K562 (cell line): ENCODE measurements at regions of chr9 and their contacts with region 1.

Region 1: GRCh38 chr9:37870799-37871176 is 33.1 kb downstream of the SLC25A51 start:
- DNase-seq: no peak
- ATAC-seq: no peak
- H3K4me3 ChIP-seq: no peak overlapping the region
- H3K27ac ChIP-seq: no peak overlapping the region
- H3K4me1 ChIP-seq: peaks cover 0 to 7% of the 10 kb centered on the region in 2 experiments; a peak in 3 of 5 replicates
- H3K27me3 ChIP-seq: no peaks in the 10 kb centered on the region
- CTCF ChIP-seq: no peak
- EP300 ChIP-seq: no peak
- POLR2A ChIP-seq: no peak
- RAD21 ChIP-seq: no peak

Region 2: DNA sequence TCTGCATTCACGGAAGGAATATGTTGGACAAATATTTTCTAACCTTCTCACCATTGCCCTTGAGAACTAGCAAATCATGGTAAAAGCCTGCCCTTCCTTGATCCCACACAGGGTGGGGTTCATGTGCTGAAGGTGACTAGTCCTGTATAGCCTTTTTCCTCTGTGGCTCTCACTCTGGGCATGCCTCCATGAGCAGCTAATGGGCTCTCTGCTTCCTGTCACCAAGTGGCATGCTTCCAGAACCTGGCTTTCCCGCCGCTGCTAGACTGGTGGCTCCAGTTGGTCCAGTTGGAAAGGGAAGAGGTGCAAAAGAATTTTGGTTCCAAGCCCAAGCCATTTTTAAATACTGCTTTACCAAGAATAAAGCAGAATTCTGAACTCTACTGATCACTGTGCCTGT is 330.2 kb before region 1 on chr9:
- CTCF ChIA-PET with region 1: no interaction called
- POLR2A ChIA-PET with region 1: no interaction called
- in situ Hi-C with region 1: no loop called
- intact Hi-C with region 1: no loop called
- DNase-seq: no peak
- ATAC-seq: no peak
- H3K4me3 ChIP-seq: no peak overlapping the region
- H3K27ac ChIP-seq: no peak overlapping the region
- H3K4me1 ChIP-seq: no peaks in the 10 kb centered on the region
- H3K27me3 ChIP-seq: no peaks in the 10 kb centered on the region
- CTCF ChIP-seq: no peak
- EP300 ChIP-seq: no peak
- POLR2A ChIP-seq: no peak
- RAD21 ChIP-seq: no peak

Region 3: DNA sequence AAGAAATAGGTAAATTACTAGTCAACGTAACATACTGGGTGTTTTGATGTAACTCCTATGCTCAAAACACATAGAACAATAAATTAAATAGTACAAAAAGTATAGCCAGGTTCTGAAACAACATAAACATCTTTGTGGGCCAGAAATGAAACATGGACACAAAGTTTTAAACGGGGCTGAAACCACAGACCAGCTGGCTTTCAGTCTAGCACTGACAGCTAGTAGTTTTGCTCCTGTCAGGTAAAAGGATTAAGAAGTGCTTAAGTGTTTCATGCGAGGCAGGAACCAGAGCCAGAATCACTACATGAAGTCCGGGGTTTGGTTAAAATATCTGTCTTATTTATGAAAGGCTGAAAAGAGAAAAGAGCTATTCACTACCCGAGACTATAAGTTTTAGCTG is 50.6 kb before region 1 on chr9:
- CTCF ChIA-PET with region 1: no interaction called
- POLR2A ChIA-PET with region 1: no interaction called
- in situ Hi-C with region 1: no loop called
- intact Hi-C with region 1: no loop called
- DNase-seq: no peak
- ATAC-seq: no peak
- H3K4me3 ChIP-seq: no peak overlapping the region
- H3K27ac ChIP-seq: no peak overlapping the region
- H3K4me1 ChIP-seq: no peaks in the 10 kb centered on the region; a peak in 1 of 5 replicates
- H3K27me3 ChIP-seq: no peaks in the 10 kb centered on the region
- CTCF ChIP-seq: no peak
- EP300 ChIP-seq: no peak
- POLR2A ChIP-seq: no peak
- RAD21 ChIP-seq: no peak

Region 4: GRCh38 chr9:37880916-37881479 is 10.2 kb after region 1 on chr9:
- CTCF ChIA-PET with region 1: no interaction called
- POLR2A ChIA-PET with region 1: interaction called, 10 read pairs
- in situ Hi-C with region 1: no loop called
- intact Hi-C with region 1: no loop called
- DNase-seq: no peak
- ATAC-seq: no peak
- H3K4me3 ChIP-seq: no peak overlapping the region
- H3K27ac ChIP-seq: no peak overlapping the region
- H3K4me1 ChIP-seq: no peaks in the 10 kb centered on the region
- H3K27me3 ChIP-seq: no peaks in the 10 kb centered on the region
- CTCF ChIP-seq: no peak
- EP300 ChIP-seq: no peak
- POLR2A ChIP-seq: no peak
- RAD21 ChIP-seq: no peak

Region 5: GRCh38 chr9:37963936-37964739 is 93.3 kb after region 1 on chr9:
- CTCF ChIA-PET with region 1: no interaction called
- POLR2A ChIA-PET with region 1: no interaction called
- in situ Hi-C with region 1: no loop called
- intact Hi-C with region 1: no loop called
- DNase-seq: no peak
- ATAC-seq: no peak
- H3K4me3 ChIP-seq: no peak overlapping the region
- H3K27ac ChIP-seq: no peak overlapping the region
- H3K4me1 ChIP-seq: peaks cover 8 to 10% of the 10 kb centered on the region in 2 experiments
- H3K27me3 ChIP-seq: no peaks in the 10 kb centered on the region
- CTCF ChIP-seq: no peak
- EP300 ChIP-seq: no peak
- POLR2A ChIP-seq: no peak
- RAD21 ChIP-seq: no peak